Mammary epithelial cell (primary cell): ENCODE measurements at regions of chr17 and their contacts with region 1.

Region 1: GRCh38 chr17:82077617-82078358 is 12.2 kb upstream of the DUS1L start:
- DNase-seq: no peak
- H3K4me3 ChIP-seq: no peak overlapping the region
- H3K27ac ChIP-seq: no peak overlapping the region
- H3K4me1 ChIP-seq: no peaks in the 10 kb centered on the region
- H3K27me3 ChIP-seq: no peaks in the 10 kb centered on the region
- CTCF ChIP-seq: no peak

Region 2: GRCh38 chr17:81733507-81734404 is 344.0 kb before region 1 on chr17:
- CTCF ChIA-PET with region 1: no interaction called
- dilution Hi-C with region 1: no loop called
- in situ Hi-C with region 1: no loop called
- intact Hi-C with region 1: no loop called
- DNase-seq: peak; percentile 63
- H3K4me3 ChIP-seq: no peak overlapping the region
- H3K27ac ChIP-seq: no peak overlapping the region
- H3K4me1 ChIP-seq: peaks cover 11% of the 10 kb centered on the region
- H3K27me3 ChIP-seq: no peaks in the 10 kb centered on the region
- CTCF ChIP-seq: peak; percentile 80 to 96

Region 3: GRCh38 chr17:82098072-82098821 is 20.5 kb after region 1 on chr17 and contains the start of gene FASN:
- CTCF ChIA-PET with region 1: interaction called, 11 read pairs
- dilution Hi-C with region 1: no loop called
- in situ Hi-C with region 1: no loop called
- intact Hi-C with region 1: no loop called
- DNase-seq: peak; percentile 93
- H3K4me3 ChIP-seq: peak within 1 kb of the TSS; percentile 63 to 82 (median 68)
- H3K27ac ChIP-seq: peak within 1 kb of the TSS; percentile 76
- H3K4me1 ChIP-seq: peaks cover 38% of the 10 kb centered on the region
- H3K27me3 ChIP-seq: no peaks in the 10 kb centered on the region
- CTCF ChIP-seq: peak; percentile 26 to 57
- total RNA-seq, gene FASN: 126 to 452 TPM